Colonic mucosa (tissue), 4 donors: ENCODE measurements at regions of chr2 and their contacts with region 1.

Region 1: DNA sequence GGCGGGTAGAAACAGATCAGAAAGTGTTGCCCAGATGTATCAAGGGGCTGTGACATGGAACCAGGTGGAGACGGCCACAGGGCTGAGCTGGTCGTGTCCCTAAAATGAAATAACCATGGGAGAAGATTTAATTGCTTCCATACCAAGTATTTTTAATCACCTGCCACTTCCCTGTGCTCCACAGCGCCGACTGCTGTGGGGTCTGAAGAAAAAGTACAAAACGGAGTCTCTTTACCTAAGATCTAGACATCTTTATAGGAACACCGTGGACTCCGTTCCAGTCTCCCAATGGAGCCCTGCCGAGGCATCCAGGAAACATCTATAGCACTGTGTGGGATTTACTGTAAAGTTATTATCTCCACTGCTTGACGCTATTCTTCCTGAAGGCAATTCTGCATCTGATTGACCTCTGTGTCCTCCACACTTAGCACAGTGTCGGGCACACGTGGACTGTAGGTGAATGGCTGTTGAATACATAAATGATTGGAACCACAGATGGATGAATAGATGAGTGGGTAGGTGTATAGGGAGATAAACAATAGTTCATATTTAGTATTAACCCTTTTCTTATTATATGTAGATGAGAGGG is 21.6 kb upstream of the GYPC start:
- DNase-seq: peak; percentile 28
- H3K4me3 ChIP-seq: no peak overlapping the region
- H3K27ac ChIP-seq: no peak overlapping the region
- H3K4me1 ChIP-seq: no peaks in the 10 kb centered on the region
- H3K27me3 ChIP-seq: no peaks in the 10 kb centered on the region
- CTCF ChIP-seq: peak; percentile 32

Region 2: DNA sequence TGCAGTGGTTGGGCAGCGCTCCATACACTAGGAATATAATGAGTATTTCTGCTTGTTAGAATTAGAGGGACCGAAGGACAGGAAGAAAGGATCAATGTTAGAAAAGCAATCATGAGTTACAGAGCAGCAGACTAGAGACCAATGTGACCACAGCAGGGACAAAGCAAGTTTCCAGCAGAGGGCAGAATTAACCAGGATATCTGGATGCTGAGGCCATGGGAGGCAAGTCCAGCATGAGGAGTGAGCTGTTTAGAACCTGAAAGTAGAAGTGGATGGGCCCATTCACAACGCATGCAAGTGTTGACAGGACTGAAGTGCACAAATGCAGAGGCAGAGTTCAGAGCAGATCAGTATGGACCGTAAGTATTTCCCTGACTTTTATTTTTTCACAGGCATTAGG is 888.9 kb before region 1 on chr2:
- intact Hi-C with region 1: loop called (anchors 10 kb)
- DNase-seq: peak; percentile 45
- H3K4me3 ChIP-seq: no peak overlapping the region
- H3K27ac ChIP-seq: no peak overlapping the region
- H3K4me1 ChIP-seq: no peaks in the 10 kb centered on the region
- H3K27me3 ChIP-seq: no peaks in the 10 kb centered on the region
- CTCF ChIP-seq: no peak

Region 3: GRCh38 chr2:126571403-126571802 is 63.0 kb before region 1 on chr2:
- intact Hi-C with region 1: no loop called
- DNase-seq: no peak
- H3K4me3 ChIP-seq: no peak overlapping the region
- H3K27ac ChIP-seq: no peak overlapping the region
- H3K4me1 ChIP-seq: no peaks in the 10 kb centered on the region
- H3K27me3 ChIP-seq: no peaks in the 10 kb centered on the region
- CTCF ChIP-seq: no peak

Region 4: GRCh38 chr2:126586317-126586716 is 48.0 kb before region 1 on chr2:
- intact Hi-C with region 1: no loop called
- DNase-seq: no peak
- H3K4me3 ChIP-seq: no peak overlapping the region
- H3K27ac ChIP-seq: no peak overlapping the region
- H3K4me1 ChIP-seq: no peaks in the 10 kb centered on the region
- H3K27me3 ChIP-seq: no peaks in the 10 kb centered on the region
- CTCF ChIP-seq: no peak